Gastrocnemius medialis (tissue), 4 donors: ENCODE measurements at regions of chr2 and their contacts with region 1.

Region 1: DNA sequence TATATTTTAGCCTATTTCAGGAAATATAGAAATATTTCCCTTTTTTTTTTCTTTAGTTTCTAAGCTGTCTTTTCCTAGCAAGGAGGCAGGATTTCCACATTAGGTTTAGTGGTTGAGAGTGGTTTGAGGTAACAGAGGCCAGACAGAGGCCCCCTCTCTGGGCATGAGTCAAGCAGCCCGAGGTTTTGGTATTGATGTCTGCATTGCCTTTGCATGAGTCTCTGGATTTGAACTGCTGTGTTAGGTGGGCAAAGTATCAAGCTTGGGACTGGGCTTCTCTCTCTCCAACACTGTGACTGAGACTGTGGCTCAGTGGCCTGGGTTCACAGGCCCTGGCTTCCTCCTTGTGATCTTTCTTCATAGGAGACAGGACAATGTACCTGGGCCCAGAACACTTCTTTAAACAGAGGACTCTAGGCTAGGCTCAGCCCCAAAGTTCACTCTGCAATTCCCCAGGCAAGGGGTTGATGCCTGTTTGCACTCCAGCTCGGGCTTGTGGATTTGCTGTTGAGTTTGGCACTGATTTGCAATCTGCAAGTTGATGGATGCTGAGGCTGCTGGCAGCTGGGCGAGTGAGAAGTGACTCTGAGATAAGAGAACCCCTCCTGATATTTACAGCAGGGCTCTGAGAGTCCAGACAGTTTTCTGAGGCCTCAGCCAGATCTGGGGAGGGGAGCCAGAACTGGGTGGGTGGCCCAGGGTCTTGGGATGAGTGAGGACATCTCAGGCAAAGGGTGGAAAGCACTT is 271.2 kb downstream of the EN1 start:
- DNase-seq: no peak
- ATAC-seq: no peak
- H3K4me3 ChIP-seq: no peak overlapping the region
- H3K27ac ChIP-seq: no peak overlapping the region
- H3K4me1 ChIP-seq: peaks cover 6 to 10% of the 10 kb centered on the region in 2 donors
- H3K27me3 ChIP-seq: no peaks in the 10 kb centered on the region
- CTCF ChIP-seq: no peak
- POLR2A ChIP-seq: no peak

Region 2: GRCh38 chr2:118539290-118539689 is 37.0 kb before region 1 on chr2:
- in situ Hi-C with region 1: no loop called
- intact Hi-C with region 1: loop called (anchors 5 kb)
- DNase-seq: peak in 1 of 2 donors; percentile 33
- ATAC-seq: peak in 1 of 2 donors; percentile 46
- H3K4me3 ChIP-seq: no peak overlapping the region
- H3K27ac ChIP-seq: no peak overlapping the region
- H3K4me1 ChIP-seq: no peaks in the 10 kb centered on the region
- H3K27me3 ChIP-seq: no peaks in the 10 kb centered on the region
- CTCF ChIP-seq: peak in 2 of 5 experiments; percentile 13 to 38
- POLR2A ChIP-seq: no peak

Region 3: GRCh38 chr2:118748245-118748885 is 172.1 kb after region 1 on chr2:
- in situ Hi-C with region 1: no loop called
- intact Hi-C with region 1: loop called (anchors 10 kb)
- DNase-seq: no peak
- ATAC-seq: no peak
- H3K4me3 ChIP-seq: no peak overlapping the region
- H3K27ac ChIP-seq: no peak overlapping the region
- H3K4me1 ChIP-seq: no peaks in the 10 kb centered on the region
- H3K27me3 ChIP-seq: no peaks in the 10 kb centered on the region
- CTCF ChIP-seq: no peak
- POLR2A ChIP-seq: no peak